ENCODE measurements at regions of chr6 and their contacts with region 1.

Region 1: GRCh38 chr6:161444464-161444863 is 170.6 kb upstream of the AGPAT4 start:
- DNase-seq: no peak

Region 2: DNA sequence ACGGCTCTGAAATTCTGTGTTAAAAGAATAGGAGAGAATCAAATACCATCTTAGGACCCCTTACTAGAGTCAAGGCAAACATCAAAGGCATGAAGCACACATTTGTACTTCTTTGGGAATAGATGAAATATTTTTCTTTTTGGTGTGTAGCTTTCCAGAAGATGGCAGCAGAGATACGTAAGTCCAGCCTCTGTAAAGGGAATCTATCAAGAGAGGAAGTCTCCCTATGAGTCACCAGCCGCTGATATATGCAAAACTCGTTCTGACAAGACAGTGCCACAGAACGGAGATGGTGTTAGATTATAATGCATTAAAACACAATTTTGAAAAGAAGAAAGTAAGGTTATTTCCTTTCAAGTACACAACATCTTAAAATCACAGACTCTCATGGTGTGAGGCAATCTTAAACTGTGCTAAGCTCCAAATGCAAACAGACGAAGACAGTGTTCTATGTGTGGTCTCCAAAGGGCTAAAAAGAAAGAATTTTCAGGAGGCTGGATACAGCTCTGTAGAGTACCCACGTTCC is 50.6 kb before region 1 on chr6:
- intact Hi-C with region 1: no loop called
- DNase-seq: peak; percentile 9

Region 3: DNA sequence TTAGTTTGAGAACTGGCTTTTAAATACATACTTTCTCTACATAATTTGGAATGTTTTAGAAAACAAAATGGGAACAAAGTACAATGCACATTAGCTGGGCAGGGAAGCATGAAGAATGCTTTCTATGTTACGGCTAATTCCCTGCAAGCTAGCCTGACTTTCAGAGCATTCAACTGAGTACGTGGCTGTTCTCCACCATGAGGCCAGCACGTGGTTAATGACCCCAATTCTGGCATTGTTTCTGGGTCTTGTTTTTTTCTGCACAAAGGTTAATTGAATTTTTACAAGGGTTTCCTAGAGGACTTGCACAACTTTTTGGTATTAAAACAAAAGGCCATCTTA is 38.0 kb after region 1 on chr6:
- intact Hi-C with region 1: loop called (anchors 5 kb)
- DNase-seq: no peak